ENCODE measurements at regions of chr6 and their contacts with region 1.

Region 1: GRCh38 chr6:154276810-154277628 is 79.6 kb downstream of the IPCEF1 start:
- DNase-seq: no peak
- H3K4me3 Mint-ChIP-seq: peak overlapping the region; percentile 36
- H3K27ac Mint-ChIP-seq: no peak overlapping the region
- H3K4me1 Mint-ChIP-seq: peaks cover 26% of the 10 kb centered on the region
- H3K27me3 Mint-ChIP-seq: peaks cover 14% of the 10 kb centered on the region

Region 2: DNA sequence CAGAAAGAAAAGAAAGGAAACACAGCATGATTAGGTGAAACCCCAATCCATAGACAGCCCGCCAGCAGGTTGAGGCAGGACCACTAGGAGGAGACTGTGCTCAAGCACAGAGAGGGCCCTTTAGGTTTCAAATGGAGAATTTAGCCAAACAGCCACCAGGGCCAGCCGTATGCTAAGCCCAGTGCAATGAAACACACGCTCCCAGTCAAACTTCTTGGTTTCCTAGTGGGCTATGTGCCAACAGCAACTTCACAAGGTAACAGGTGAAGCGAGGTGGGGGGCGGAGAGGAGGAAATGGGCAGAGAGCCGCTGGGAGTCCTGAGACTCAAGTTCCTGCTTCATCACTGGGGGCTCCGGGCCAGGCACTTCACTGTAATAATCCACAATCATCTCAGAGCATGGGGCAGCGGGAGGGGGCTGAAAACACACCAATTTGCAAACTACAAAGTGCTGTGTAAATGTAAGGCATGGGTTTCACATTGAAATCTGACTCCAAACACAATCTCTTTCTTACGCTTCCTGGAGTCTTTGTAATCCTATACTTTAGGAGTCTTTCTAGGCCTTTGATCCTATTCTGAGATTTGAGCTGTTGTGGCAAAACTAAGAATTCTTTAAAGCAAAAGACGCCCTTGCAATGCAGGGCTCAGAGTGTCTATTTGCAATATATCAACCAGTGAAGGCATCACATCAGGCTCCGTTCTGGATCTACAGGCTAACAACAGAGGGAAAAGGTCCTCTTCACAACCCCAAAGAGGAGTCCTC is 120.7 kb before region 1 on chr6:
- CTCF ChIA-PET with region 1: interaction called, 106 read pairs
- DNase-seq: peak; percentile 76
- H3K4me3 Mint-ChIP-seq: peak overlapping the region; percentile 71
- H3K27ac Mint-ChIP-seq: peak overlapping the region; percentile 89
- H3K4me1 Mint-ChIP-seq: peaks cover 39% of the 10 kb centered on the region
- H3K27me3 Mint-ChIP-seq: peaks cover under 1% of the 10 kb centered on the region

Region 3: GRCh38 chr6:154164397-154165165 is 112.4 kb before region 1 on chr6:
- CTCF ChIA-PET with region 1: interaction called, 106 read pairs
- DNase-seq: no peak
- H3K4me3 Mint-ChIP-seq: no peak overlapping the region
- H3K27ac Mint-ChIP-seq: no peak overlapping the region
- H3K4me1 Mint-ChIP-seq: peaks cover 21% of the 10 kb centered on the region
- H3K27me3 Mint-ChIP-seq: no peaks in the 10 kb centered on the region

Region 4: GRCh38 chr6:154247119-154247861 is 29.7 kb before region 1 on chr6:
- CTCF ChIA-PET with region 1: interaction called, 10 read pairs
- DNase-seq: peak; percentile 46
- H3K4me3 Mint-ChIP-seq: peak overlapping the region; percentile 92
- H3K27ac Mint-ChIP-seq: peak overlapping the region; percentile 95
- H3K4me1 Mint-ChIP-seq: peaks cover 85% of the 10 kb centered on the region
- H3K27me3 Mint-ChIP-seq: no peaks in the 10 kb centered on the region

Region 5: DNA sequence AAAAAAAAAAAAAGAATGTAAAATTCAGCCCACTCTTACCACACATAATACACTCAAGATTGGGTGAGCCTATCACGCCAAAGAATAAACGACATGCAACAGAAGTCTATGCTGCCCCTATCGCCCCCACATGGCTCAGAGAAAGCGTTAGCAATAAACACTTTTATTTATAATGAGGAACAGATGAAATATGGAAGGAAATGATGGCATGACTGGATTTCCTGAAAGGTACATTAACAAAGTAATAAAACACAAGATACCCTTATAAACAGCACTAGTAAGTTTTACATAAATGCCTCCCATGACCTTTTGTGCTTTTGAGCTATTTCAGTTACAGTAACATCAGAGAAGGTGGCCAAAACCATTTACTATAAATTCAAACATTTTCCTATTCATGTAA is 384.7 kb after region 1 on chr6:
- CTCF ChIA-PET with region 1: no interaction called
- DNase-seq: no peak
- H3K4me3 Mint-ChIP-seq: no peak overlapping the region
- H3K27ac Mint-ChIP-seq: no peak overlapping the region
- H3K4me1 Mint-ChIP-seq: no peaks in the 10 kb centered on the region
- H3K27me3 Mint-ChIP-seq: no peaks in the 10 kb centered on the region

Measured in activated naive CD4-positive, alpha-beta T cell treated with anti-CD3 and anti-CD28 coated beads, Interleukin-2, amount 10 ng/mL, durations not matched to agents 7 days and 5 days (primary cell).